ENCODE measurements at regions of chr6 and their contacts with region 1.

Region 1: DNA sequence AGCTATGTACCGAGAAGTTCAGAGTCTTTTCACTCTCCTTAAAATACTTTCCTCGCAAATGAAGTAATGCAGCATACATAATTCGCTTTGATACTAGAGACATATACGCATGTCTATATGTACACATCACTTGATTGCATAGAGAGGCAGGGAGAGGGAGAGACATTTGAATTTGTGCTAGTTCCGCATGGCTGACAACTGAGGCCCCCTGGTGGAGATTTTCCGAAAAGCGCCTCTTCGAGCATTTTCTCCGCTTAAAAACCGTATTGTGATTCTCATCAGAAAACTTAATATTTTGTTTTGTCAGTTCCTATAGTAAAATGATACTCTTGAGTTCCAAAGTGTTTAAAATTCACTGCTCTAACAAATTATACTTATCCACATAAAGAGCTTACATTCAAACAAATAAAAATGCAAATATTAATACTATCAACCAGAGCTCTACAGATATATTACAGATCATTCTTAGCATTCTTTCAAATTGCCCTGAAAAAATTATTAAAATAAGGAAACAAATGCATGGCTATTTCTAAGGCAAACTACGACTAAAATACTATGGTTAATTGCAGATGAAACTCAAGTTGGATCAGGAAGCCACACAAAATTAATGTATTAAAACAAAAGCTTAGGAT is 637 bp downstream of the MYLK4 start:
- DNase-seq: peak in 3 of 5 donors; percentile 43 to 61 (median 49)
- ATAC-seq: peak; percentile 20 to 70 (median 58)
- H3K4me3 ChIP-seq: peak overlapping the region in 8 of 12 donors; percentile 2 to 41 (median 20)
- H3K27ac ChIP-seq: peak overlapping the region in 1 of 12 donors; percentile 11
- H3K4me1 ChIP-seq: peaks cover 0 to 15% (median 9%) of the 10 kb centered on the region in 12 donors
- H3K27me3 ChIP-seq: no peaks in the 10 kb centered on the region
- CTCF ChIP-seq: peak; percentile 82 to 95 (median 86)
- POLR2A ChIP-seq: no peak

Region 2: DNA sequence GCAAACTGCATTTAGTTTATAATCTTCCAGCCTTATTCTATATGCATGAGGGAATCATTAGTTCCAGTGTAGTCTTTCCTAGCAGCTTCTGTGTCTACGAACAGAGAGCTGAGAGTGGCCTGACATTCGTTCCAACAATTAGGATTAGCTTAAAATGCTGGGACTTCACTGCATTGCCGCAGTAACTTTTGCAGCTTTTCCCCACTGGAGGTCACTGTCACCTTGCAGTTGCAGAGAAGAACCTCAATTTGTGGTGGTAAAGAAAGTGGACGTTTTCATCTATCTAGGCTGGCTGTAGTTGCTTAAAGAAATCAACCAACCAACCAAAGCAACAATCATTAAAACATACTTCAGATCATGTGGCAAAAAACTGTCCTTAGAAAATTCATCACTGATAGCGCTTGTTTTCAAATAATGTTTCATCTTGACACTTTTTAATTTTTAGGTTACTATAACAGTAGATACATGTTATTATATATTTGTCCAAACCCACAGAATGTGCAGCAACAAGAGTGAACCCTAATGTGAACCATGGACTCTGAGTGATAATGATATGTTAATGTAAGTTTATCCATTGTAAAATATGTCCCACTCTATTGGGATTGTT is 11.6 kb before region 1 on chr6:
- intact Hi-C with region 1: loop called in 1 of 10 experiments (anchors 1 kb)
- DNase-seq: peak in 2 of 5 donors; percentile 29 to 48
- ATAC-seq: peak in 2 of 4 donors; percentile 18 to 31
- H3K4me3 ChIP-seq: no peak overlapping the region
- H3K27ac ChIP-seq: peak overlapping the region in 3 of 12 donors; percentile 1 to 26 (median 4)
- H3K4me1 ChIP-seq: peaks cover 0 to 38% (median 13%) of the 10 kb centered on the region in 12 donors
- H3K27me3 ChIP-seq: no peaks in the 10 kb centered on the region
- CTCF ChIP-seq: peak; percentile 36 to 77 (median 64)
- POLR2A ChIP-seq: no peak

Measured in heart left ventricle (tissue), 16 donors.